Ovary (tissue), 10 donors: ENCODE measurements at regions of chr6 and their contacts with region 1.

Region 1: GRCh38 chr6:78076371-78076770 is 423.5 kb downstream of the MEI4 start:
- DNase-seq: no peak
- H3K4me3 ChIP-seq: no peak overlapping the region
- H3K27ac ChIP-seq: no peak overlapping the region
- H3K4me1 ChIP-seq: no peaks in the 10 kb centered on the region
- H3K27me3 ChIP-seq: no peaks in the 10 kb centered on the region
- CTCF ChIP-seq: no peak
- EP300 ChIP-seq: no peak
- POLR2A ChIP-seq: no peak

Region 2: DNA sequence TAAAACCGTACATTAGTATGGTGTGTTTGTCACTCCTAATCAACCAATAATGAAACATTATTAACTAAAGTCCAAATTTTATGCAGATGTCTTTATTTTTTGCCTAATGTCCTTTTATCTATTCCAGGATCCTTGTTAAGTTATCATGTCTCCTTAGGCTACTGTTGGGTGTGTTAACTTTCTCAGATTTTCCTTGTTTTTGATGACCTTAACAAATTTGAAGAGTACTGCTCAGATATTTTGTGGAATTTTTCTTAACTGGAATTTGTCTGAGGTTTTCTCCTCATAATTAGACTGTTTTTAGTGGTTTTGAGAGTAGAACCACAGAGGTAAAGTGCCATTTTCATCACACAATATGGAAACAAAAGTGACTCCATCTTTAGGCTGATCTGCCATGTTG is 17.2 kb before region 1 on chr6:
- intact Hi-C with region 1: loop called in 1 of 4 experiments (anchors 2 kb)
- DNase-seq: no peak
- H3K4me3 ChIP-seq: no peak overlapping the region
- H3K27ac ChIP-seq: no peak overlapping the region
- H3K4me1 ChIP-seq: no peaks in the 10 kb centered on the region
- H3K27me3 ChIP-seq: no peaks in the 10 kb centered on the region
- CTCF ChIP-seq: no peak
- EP300 ChIP-seq: no peak
- POLR2A ChIP-seq: no peak

Region 3: DNA sequence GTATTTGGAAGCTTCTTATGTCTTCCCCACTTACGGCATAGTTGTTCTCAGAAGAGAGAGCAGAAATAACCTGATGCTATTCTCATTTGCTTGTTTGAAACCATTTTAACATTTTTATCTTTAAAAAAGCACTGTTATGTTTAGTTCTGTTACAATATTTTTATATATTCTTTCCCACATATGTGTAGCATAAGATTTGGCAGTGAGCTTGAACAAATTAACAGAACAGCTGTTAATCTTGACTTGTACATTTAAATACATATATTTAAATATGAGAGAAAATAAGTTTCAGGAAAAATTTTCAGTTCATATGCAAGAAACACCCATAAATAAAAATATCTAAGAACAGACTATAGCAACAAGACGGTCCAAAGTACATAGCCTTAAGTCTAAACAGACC is 359.3 kb after region 1 on chr6:
- intact Hi-C with region 1: no loop called
- DNase-seq: no peak
- H3K4me3 ChIP-seq: no peak overlapping the region
- H3K27ac ChIP-seq: no peak overlapping the region
- H3K4me1 ChIP-seq: no peaks in the 10 kb centered on the region
- H3K27me3 ChIP-seq: no peaks in the 10 kb centered on the region
- CTCF ChIP-seq: no peak
- EP300 ChIP-seq: no peak
- POLR2A ChIP-seq: no peak